BJ (cell line): ENCODE measurements at regions of chr1 and their contacts with region 1.

Region 1: DNA sequence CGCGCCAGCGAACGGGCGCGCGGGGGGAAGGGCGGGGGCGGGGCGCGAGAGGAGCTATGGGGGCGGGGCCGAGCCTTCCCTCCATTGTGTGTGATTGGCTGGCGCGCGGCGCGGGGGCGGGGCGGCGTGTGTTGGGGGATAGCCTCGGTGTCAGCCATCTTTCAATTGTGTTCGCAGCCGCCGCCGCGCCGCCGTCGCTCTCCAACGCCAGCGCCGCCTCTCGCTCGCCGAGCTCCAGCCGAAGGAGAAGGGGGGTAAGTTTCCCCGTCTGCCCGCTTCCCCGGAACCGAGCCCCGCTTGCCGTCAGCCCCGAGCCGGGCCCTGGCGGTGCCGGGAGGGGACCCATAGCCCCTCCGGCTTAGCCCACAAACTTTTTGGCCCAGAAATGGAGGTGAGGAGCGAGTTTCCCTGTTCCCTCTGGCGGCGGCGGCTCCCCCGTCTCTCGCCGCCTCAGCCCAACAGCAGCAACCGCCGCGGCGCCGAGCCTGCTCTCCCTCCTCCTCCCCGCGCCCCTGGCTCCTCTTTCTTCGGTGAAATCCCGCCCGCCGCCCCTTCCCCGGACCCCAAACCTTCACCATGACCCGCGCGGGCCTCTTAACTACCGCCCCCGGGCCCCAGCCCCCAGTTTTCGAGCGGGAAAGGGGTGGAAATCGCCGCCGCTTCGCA is at the start of gene H3-3A:
- DNase-seq: peak; percentile 43
- H3K4me3 ChIP-seq: peak within 1 kb of the TSS; percentile 70
- H3K27me3 ChIP-seq: no peaks in the 10 kb centered on the region
- CTCF ChIP-seq: no peak
- polyA plus RNA-seq, gene H3-3A: 164 and 168 TPM in 2 replicates

Region 2: DNA sequence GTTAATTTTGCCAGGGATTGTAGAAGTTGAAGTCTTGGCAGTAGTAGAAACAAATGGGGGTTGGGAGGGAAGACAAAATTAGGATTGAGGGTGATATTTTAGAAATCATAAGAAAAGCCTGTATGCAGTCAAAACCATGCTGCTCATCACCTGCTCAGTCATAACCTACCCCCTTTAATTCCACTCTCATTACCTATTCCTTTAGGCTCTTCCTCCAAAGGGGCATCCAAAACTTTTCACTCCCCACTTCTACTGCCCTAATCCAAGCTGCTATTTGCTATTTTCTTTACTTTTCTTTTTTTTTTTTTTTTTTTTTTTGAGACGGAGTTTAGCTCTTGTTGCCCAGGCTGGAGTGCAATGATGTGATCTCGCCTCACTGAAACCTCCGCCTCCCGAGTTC is 11.4 kb after region 1 on chr1:
- CTCF ChIA-PET with region 1: interaction called, 14 read pairs
- POLR2A ChIA-PET with region 1: interaction called, 4 read pairs
- DNase-seq: no peak
- H3K4me3 ChIP-seq: no peak overlapping the region
- H3K27me3 ChIP-seq: no peaks in the 10 kb centered on the region
- CTCF ChIP-seq: no peak

Region 3: DNA sequence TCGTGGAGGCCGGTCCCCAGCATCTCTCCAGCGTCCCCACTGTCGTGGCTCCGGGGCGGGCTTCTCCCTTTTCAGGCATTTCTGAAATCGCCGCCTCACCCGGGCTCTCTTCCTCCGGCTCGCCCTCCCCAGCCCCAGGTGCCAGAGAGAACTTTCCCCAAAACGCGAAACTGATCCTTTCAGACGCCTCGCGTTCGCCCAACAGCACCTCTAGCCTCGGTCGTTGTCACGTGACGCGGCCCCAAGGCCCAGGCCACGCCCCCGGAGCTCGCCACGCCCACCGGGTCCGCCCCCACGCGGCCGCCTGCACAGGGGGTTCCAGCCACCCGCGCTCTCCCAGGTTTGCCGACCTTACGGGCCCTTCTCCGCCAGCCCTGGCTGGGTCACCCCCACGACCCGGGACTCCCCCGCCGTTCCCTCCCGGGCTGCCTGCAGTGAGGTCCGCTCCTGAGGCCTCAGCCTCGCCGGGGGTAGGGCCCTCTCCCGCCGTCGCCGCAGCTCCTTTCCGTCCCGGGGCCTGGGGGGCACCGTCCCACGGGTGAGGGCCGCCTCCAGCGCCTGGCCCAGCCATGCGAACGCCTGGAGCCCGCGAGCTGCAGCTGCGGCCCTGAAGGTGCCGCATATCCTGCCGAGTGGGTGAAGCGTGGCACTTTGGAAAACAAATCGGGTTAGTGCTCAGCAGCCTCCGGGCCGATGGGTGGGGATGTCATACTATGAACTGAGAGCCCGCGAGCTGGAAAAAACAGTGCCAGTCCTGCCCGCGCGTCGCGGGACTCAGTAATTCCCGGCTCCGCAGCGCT is 20.8 kb after region 1 on chr1:
- CTCF ChIA-PET with region 1: interaction called, 13 read pairs
- POLR2A ChIA-PET with region 1: interaction called, 5 read pairs
- DNase-seq: no peak
- H3K4me3 ChIP-seq: peak overlapping the region; percentile 59
- H3K27me3 ChIP-seq: no peaks in the 10 kb centered on the region
- CTCF ChIP-seq: no peak

Region 4: GRCh38 chr1:226093621-226094020 is 30.9 kb after region 1 on chr1:
- CTCF ChIA-PET with region 1: interaction called, 13 read pairs
- POLR2A ChIA-PET with region 1: no interaction called
- DNase-seq: no peak
- H3K4me3 ChIP-seq: no peak overlapping the region
- H3K27me3 ChIP-seq: no peaks in the 10 kb centered on the region
- CTCF ChIP-seq: no peak

Region 5: GRCh38 chr1:226176870-226177269 is 114.2 kb after region 1 on chr1:
- CTCF ChIA-PET with region 1: no interaction called
- POLR2A ChIA-PET with region 1: no interaction called
- DNase-seq: no peak
- H3K4me3 ChIP-seq: no peak overlapping the region
- H3K27me3 ChIP-seq: no peaks in the 10 kb centered on the region
- CTCF ChIP-seq: no peak

Region 6: GRCh38 chr1:226201029-226201593 is 138.4 kb after region 1 on chr1:
- CTCF ChIA-PET with region 1: interaction called, 10 read pairs
- POLR2A ChIA-PET with region 1: no interaction called
- DNase-seq: no peak
- H3K4me3 ChIP-seq: no peak overlapping the region
- H3K27me3 ChIP-seq: no peaks in the 10 kb centered on the region; the same call in 1 of the 2 replicates
- CTCF ChIP-seq: peak; percentile 54

Region 7: DNA sequence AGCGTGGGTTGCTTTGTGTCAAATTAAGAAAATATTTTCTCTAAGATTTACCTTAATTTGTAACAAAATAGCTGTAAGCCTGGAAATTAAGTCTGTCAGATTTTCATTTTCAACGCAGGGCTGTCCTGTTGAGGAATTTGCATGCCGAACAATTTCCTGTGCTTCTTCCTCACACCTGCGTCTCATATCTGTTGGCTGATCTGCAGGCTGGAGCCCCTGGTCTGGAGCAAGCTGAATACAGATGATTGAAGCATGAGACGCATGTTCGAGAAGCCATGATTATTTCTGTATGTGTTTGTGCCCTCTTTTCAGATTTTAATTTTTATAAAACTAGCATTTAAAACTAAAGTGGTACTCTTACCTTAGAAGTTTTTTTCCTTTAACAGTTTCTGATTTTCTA is 170.6 kb after region 1 on chr1:
- CTCF ChIA-PET with region 1: no interaction called
- POLR2A ChIA-PET with region 1: no interaction called
- DNase-seq: no peak
- H3K4me3 ChIP-seq: no peak overlapping the region
- H3K27me3 ChIP-seq: no peaks in the 10 kb centered on the region
- CTCF ChIP-seq: no peak